Heart right ventricle (tissue), 16 donors: ENCODE measurements at regions of chr19 and their contacts with region 1.

Region 1: GRCh38 chr19:44113138-44113783 is at the start of gene ZNF225:
- DNase-seq: peak; percentile 87 to 99
- ATAC-seq: peak; percentile 98 to 100 (median 99)
- H3K4me3 ChIP-seq: peak within 1 kb of the TSS; percentile 44 to 85 (median 73)
- H3K27ac ChIP-seq: peak within 1 kb of the TSS in 9 of 10 donors; percentile 37 to 88 (median 84)
- H3K4me1 ChIP-seq: peaks cover 0 to 31% (median 19%) of the 10 kb centered on the region in 9 donors
- H3K27me3 ChIP-seq: no peaks in the 10 kb centered on the region
- CTCF ChIP-seq: peak in 2 of 9 donors; percentile 4 to 24
- total RNA-seq, gene ZNF225: 2.3 to 5.0 (median 3.2) TPM

Region 2: DNA sequence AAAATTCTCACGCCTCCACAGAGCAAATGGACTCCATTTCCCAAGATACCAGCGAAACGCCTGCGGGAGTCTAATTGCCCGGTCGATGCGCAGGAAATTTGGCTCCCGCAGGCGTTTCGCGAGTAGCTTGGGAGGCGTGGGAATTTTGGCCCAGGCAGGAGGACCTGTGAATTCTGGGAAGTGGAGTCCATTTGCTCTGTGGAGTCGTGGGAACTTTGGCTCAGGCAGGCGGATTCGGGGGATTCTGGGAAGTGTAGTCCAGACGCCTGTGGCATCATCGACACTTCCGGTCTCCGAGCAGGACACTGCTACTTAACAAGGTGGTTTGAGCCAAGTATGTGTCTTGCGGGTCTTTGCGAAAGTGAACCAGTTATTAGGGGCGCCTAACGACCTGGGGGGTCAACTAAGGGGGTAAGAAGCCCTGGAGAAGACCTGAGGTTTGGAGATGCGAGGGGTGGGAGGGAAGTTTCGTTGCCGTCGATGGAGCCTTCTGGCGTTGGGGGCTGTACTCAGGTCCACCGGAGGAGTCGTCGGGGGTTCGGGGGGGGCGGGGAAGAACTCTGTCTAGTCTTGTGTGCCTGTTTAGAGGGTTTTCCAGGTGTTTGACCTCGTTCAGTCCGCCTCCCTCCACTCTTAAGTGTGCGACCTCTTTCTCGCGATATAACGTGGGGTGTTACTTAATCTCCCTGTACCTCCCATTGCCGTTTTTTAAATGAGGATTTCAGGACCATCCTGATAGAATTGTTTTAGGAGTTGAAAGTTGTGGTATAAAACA is 129.2 kb before region 1 on chr19 and contains the start of gene ZNF155:
- intact Hi-C with region 1: loop called in 2 of 10 experiments (anchors 1 to 10 kb)
- DNase-seq: peak; percentile 88 to 97
- ATAC-seq: peak; percentile 98 to 100 (median 100)
- H3K4me3 ChIP-seq: peak within 1 kb of the TSS; percentile 51 to 80 (median 70)
- H3K27ac ChIP-seq: peak within 1 kb of the TSS in 9 of 10 donors; percentile 69 to 83 (median 81)
- H3K4me1 ChIP-seq: peaks cover 0 to 20% (median 12%) of the 10 kb centered on the region in 9 donors
- H3K27me3 ChIP-seq: no peaks in the 10 kb centered on the region
- CTCF ChIP-seq: no peak
- total RNA-seq, gene ZNF155: 1.5 to 7.8 (median 6.9) TPM

Region 3: DNA sequence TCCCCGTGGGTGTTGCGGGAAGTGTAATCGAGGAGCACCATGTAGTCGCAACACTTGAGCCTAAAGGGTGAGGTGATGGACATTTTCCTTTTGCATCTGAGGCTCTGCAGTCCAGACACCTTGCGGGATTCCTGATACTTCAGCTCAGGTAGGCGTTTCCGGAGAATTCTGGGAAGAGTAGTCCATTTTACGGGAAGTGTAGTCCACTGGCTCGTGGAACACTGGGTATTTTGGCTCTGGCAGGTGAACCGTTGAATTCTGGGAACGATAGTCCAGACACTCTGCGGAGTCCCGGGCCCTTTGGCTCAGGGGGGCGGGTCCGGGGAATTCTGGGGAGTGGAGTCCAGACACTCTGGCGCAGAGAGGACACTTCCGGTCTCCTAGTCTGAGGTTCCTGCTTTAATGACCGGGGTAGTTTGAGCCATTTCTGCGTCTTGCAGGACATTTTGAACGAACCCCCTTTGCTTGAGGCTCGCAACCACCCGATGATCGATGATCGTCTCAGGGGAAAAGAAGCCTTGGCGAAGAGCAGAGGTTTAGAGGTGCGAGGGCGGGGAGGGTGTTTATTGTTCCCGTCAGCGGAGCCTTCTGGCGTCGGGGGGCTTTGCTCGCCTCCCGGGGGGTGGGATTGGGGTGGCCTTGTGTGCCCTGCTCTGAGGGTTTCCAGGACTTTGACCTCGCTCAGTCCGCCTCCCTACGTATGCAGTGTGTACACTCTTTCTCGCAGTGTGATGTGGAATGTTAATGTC is 61.4 kb before region 1 on chr19 and contains the start of gene ZNF223:
- intact Hi-C with region 1: loop called in 2 of 10 experiments (anchors 2 to 5 kb)
- DNase-seq: peak; percentile 92 to 97
- ATAC-seq: peak; percentile 100
- H3K4me3 ChIP-seq: peak within 1 kb of the TSS; percentile 52 to 81 (median 71)
- H3K27ac ChIP-seq: peak within 1 kb of the TSS in 9 of 10 donors; percentile 49 to 82 (median 64)
- H3K4me1 ChIP-seq: peaks cover 3 to 21% (median 12%) of the 10 kb centered on the region in 9 donors
- H3K27me3 ChIP-seq: peaks cover 0 to 37% (median 18%) of the 10 kb centered on the region in 7 donors
- CTCF ChIP-seq: no peak
- total RNA-seq, gene ZNF223: 2.3 to 5.4 (median 3.2) TPM

Region 4: GRCh38 chr19:44141191-44142058 is 28.2 kb after region 1 on chr19 and contains the start of gene ZNF234:
- intact Hi-C with region 1: loop called in 2 of 10 experiments (anchors 1 kb)
- DNase-seq: peak; percentile 70 to 93
- ATAC-seq: peak; percentile 95 to 99 (median 98)
- H3K4me3 ChIP-seq: peak within 1 kb of the TSS; percentile 81 to 97 (median 93)
- H3K27ac ChIP-seq: peak within 1 kb of the TSS; percentile 24 to 92 (median 87)
- H3K4me1 ChIP-seq: peaks cover 0 to 37% (median 17%) of the 10 kb centered on the region in 9 donors
- H3K27me3 ChIP-seq: no peaks in the 10 kb centered on the region
- CTCF ChIP-seq: peak in 5 of 9 donors; percentile 6 to 27 (median 8)
- total RNA-seq, gene ZNF234: 8.0 to 13.4 (median 9.0) TPM

Region 5: DNA sequence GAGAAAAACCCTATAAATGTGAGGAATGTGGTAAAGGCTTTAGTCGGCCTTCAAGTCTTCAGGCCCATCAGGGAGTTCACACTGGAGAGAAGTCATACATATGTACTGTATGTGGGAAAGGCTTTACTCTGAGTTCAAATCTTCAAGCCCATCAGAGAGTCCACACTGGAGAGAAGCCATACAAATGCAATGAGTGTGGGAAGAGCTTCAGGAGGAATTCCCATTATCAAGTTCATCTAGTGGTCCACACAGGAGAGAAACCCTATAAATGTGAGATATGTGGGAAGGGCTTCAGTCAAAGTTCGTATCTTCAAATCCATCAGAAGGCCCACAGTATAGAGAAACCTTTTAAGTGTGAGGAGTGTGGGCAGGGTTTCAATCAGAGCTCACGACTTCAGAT is 63.3 kb after region 1 on chr19:
- intact Hi-C with region 1: no loop called
- DNase-seq: no peak
- ATAC-seq: no peak
- H3K4me3 ChIP-seq: no peak overlapping the region
- H3K27ac ChIP-seq: no peak overlapping the region
- H3K4me1 ChIP-seq: no peaks in the 10 kb centered on the region
- H3K27me3 ChIP-seq: no peaks in the 10 kb centered on the region
- CTCF ChIP-seq: no peak

Region 6: DNA sequence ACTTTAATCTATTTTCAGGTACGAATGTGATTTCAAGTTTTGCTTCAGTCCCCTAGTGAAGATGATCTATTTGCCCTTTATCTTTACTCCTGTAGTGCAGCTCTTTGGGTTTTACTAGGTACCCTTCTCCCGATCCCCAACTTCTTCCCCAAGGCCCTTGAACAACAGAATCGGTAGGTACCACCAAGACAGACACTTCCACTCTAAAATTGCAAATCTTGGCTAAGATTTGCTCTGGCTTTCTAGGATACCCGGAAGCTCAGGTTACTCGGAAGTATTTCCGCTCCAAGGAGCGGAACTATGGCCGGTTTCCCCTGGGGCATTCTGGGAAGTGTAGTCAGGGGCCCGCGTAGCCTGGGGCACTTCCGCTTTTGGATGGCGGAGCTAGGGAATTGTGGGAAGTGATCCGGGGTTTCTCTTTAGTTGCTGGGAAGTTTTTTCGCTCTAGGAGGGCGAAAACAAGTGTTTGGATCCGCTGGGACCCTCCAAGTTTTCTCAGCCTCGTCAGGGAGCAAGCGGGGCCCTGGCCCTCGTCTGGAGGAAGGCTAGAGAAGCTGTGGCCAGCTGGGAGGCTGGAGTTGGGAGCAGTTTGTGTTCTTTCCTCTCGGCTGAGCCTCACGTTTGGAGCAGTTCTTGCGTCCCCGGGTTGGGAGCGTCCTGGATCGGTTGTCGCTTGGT is 94.0 kb after region 1 on chr19:
- intact Hi-C with region 1: loop called in 2 of 10 experiments (anchors 5 kb)
- DNase-seq: peak; percentile 86 to 94
- ATAC-seq: peak; percentile 94 to 98 (median 97)
- H3K4me3 ChIP-seq: peak overlapping the region; percentile 58 to 95 (median 76)
- H3K27ac ChIP-seq: peak overlapping the region; percentile 88 to 96 (median 93)
- H3K4me1 ChIP-seq: peaks cover 0 to 16% (median 8%) of the 10 kb centered on the region in 9 donors
- H3K27me3 ChIP-seq: peaks cover 0 to 5% (median 0%) of the 10 kb centered on the region in 7 donors
- CTCF ChIP-seq: no peak

Region 7: GRCh38 chr19:44304659-44305193 is 191.5 kb after region 1 on chr19 and contains the start of gene ZNF235:
- intact Hi-C with region 1: loop called in 3 of 10 experiments (anchors 2 to 10 kb)
- DNase-seq: peak; percentile 85 to 92
- ATAC-seq: peak; percentile 99 to 100 (median 100)
- H3K4me3 ChIP-seq: peak within 1 kb of the TSS; percentile 37 to 95 (median 80)
- H3K27ac ChIP-seq: peak within 1 kb of the TSS; percentile 4 to 86 (median 80)
- H3K4me1 ChIP-seq: peaks cover 3 to 16% (median 12%) of the 10 kb centered on the region in 9 donors
- H3K27me3 ChIP-seq: no peaks in the 10 kb centered on the region
- CTCF ChIP-seq: no peak
- total RNA-seq, gene ZNF235: 2.4 to 5.1 (median 3.6) TPM